ENCODE measurements at regions of chr9 and their contacts with region 1.

Region 1: GRCh38 chr9:87336914-87337333 is 160.7 kb upstream of the DAPK1 start:
- DNase-seq: peak; percentile 24 to 48
- H3K4me3 ChIP-seq: peak overlapping the region; percentile 16
- H3K4me3 Mint-ChIP-seq: peak overlapping the region; percentile 72
- H3K27ac Mint-ChIP-seq: no peak overlapping the region
- H3K4me1 ChIP-seq: peaks cover 10% of the 10 kb centered on the region
- H3K4me1 Mint-ChIP-seq: peaks cover 8% of the 10 kb centered on the region
- H3K27me3 ChIP-seq: no peaks in the 10 kb centered on the region
- H3K27me3 Mint-ChIP-seq: no peaks in the 10 kb centered on the region
- CTCF ChIP-seq: peak in 1 of 2 experiments; percentile 46

Region 2: GRCh38 chr9:87309236-87309635 is 27.7 kb before region 1 on chr9:
- CTCF ChIA-PET with region 1: no interaction called
- POLR2A ChIA-PET with region 1: no interaction called
- intact Hi-C with region 1: no loop called
- DNase-seq: no peak
- H3K4me3 ChIP-seq: no peak overlapping the region
- H3K4me3 Mint-ChIP-seq: no peak overlapping the region
- H3K27ac Mint-ChIP-seq: no peak overlapping the region
- H3K4me1 ChIP-seq: no peaks in the 10 kb centered on the region
- H3K4me1 Mint-ChIP-seq: no peaks in the 10 kb centered on the region
- H3K27me3 ChIP-seq: no peaks in the 10 kb centered on the region
- H3K27me3 Mint-ChIP-seq: peaks cover 4% of the 10 kb centered on the region
- CTCF ChIP-seq: no peak

Region 3: GRCh38 chr9:87324613-87325194 is 12.2 kb before region 1 on chr9:
- CTCF ChIA-PET with region 1: no interaction called
- POLR2A ChIA-PET with region 1: no interaction called
- intact Hi-C with region 1: no loop called
- DNase-seq: peak in 1 of 2 experiments; percentile 18
- H3K4me3 ChIP-seq: no peak overlapping the region
- H3K4me3 Mint-ChIP-seq: no peak overlapping the region
- H3K27ac Mint-ChIP-seq: no peak overlapping the region
- H3K4me1 ChIP-seq: no peaks in the 10 kb centered on the region
- H3K4me1 Mint-ChIP-seq: no peaks in the 10 kb centered on the region
- H3K27me3 ChIP-seq: no peaks in the 10 kb centered on the region
- H3K27me3 Mint-ChIP-seq: peaks cover 3% of the 10 kb centered on the region
- CTCF ChIP-seq: peak; percentile 35 to 40

Region 4: DNA sequence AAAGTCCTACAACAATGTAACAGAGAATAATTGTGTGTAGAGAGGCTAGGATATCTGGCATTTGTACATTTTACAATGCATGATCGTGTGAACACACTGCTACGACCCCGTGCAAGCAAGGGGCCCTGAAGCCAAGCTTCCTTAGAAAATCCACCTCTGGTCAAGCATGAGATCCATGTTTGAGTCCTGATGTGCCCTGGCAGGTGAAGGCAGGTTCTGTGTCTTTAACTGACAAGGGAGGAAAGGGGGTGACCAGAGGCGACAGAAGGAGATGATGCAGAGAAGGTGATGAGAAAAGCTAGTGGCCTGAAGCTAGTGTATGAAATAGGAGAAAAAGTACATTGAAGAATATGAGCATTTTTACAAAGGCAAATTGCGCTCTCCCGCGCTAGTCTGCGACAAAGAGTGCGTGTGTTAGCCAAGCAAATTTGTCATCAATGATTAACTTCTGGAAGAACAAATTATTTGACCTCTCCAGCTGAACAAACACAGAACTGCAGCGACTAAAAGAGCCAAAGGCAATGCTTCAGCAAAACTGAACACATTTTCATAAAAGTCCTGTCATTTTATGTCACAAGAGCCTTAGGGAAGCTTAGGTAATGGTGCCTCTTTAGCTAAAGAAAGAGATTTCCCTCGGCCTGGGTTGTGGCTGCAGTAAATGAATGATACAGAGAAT is 59.0 kb after region 1 on chr9:
- CTCF ChIA-PET with region 1: no interaction called
- POLR2A ChIA-PET with region 1: no interaction called
- intact Hi-C with region 1: loop called (anchors 1 kb)
- DNase-seq: peak; percentile 66 to 69
- H3K4me3 ChIP-seq: no peak overlapping the region
- H3K4me3 Mint-ChIP-seq: peak overlapping the region; percentile 45
- H3K27ac Mint-ChIP-seq: peak overlapping the region; percentile 69
- H3K4me1 ChIP-seq: peaks cover 20% of the 10 kb centered on the region
- H3K4me1 Mint-ChIP-seq: peaks cover 8% of the 10 kb centered on the region
- H3K27me3 ChIP-seq: no peaks in the 10 kb centered on the region
- H3K27me3 Mint-ChIP-seq: no peaks in the 10 kb centered on the region
- CTCF ChIP-seq: no peak

Region 5: GRCh38 chr9:87497604-87498045 is 160.7 kb after region 1 on chr9 and contains the start of gene DAPK1:
- CTCF ChIA-PET with region 1: interaction called, 7 read pairs
- POLR2A ChIA-PET with region 1: no interaction called
- intact Hi-C with region 1: loop called (anchors 1 kb)
- DNase-seq: peak; percentile 68 to 73
- H3K4me3 ChIP-seq: peak within 1 kb of the TSS; percentile 70
- H3K4me3 Mint-ChIP-seq: peak within 1 kb of the TSS; percentile 78
- H3K27ac Mint-ChIP-seq: peak within 1 kb of the TSS; percentile 73
- H3K4me1 ChIP-seq: peaks cover 6% of the 10 kb centered on the region; the same call in 1 of the 2 replicates
- H3K4me1 Mint-ChIP-seq: peaks cover 11% of the 10 kb centered on the region
- H3K27me3 ChIP-seq: no peaks in the 10 kb centered on the region
- H3K27me3 Mint-ChIP-seq: no peaks in the 10 kb centered on the region
- CTCF ChIP-seq: peak; percentile 13 to 18
- total RNA-seq, gene DAPK1: 65.8 and 79.2 TPM in 2 replicates

Region 6: DNA sequence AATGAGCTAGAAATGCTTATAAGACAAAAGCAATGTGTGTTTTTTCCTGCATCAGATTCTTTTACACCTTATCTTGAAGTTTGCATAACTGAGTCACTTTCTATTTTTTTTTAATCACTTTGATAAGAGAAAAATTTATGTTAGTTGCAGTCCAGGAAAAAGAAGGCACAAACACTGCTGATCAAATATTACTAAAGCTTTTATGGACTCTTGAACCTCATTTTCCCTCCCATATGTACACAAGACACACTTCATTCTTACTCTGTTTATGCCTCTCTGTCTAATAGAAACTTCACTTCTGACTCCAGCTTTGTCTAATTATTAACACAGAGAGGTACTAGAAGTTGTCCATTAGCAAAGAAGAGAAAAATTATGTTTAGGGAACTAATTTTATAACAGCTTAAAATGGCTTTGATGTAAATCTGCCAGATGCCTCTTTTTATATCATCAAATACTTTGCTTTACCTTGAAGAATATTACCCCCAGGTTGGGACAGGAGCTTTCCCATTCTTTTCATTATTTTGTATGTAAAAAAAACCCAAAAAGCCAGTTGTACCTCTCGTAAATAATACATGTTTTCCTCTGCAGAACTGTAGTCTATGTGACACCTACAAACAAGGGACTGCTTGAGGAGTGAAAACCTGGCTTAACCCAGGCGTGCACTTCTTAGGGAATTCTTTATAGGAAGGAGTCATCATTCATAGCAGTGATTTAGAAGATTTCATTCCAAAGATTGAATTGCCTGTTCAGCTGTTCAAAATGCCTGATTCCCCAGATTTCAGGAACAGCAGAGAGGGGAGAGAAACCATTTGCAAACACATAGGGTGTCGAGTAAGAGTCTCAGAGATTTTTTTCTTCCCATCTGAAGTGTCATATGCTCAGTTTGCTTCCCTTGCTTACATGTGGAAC is 233.3 kb after region 1 on chr9:
- CTCF ChIA-PET with region 1: no interaction called
- POLR2A ChIA-PET with region 1: no interaction called
- intact Hi-C with region 1: loop called (anchors 10 kb)
- DNase-seq: peak in 1 of 2 experiments; percentile 40
- H3K4me3 ChIP-seq: 0 out of 2 replicates have a peak overlapping the region, but pooled peaks have one; percentile 9
- H3K4me3 Mint-ChIP-seq: peak overlapping the region; percentile 48
- H3K27ac Mint-ChIP-seq: peak overlapping the region; percentile 72
- H3K4me1 ChIP-seq: peaks cover 34% of the 10 kb centered on the region
- H3K4me1 Mint-ChIP-seq: peaks cover 7% of the 10 kb centered on the region
- H3K27me3 ChIP-seq: no peaks in the 10 kb centered on the region
- H3K27me3 Mint-ChIP-seq: no peaks in the 10 kb centered on the region
- CTCF ChIP-seq: no peak

Region 7: GRCh38 chr9:87640385-87640795 is 303.5 kb after region 1 on chr9:
- CTCF ChIA-PET with region 1: no interaction called
- POLR2A ChIA-PET with region 1: no interaction called
- intact Hi-C with region 1: loop called (anchors 5 kb)
- DNase-seq: no peak
- H3K4me3 ChIP-seq: no peak overlapping the region
- H3K4me3 Mint-ChIP-seq: no peak overlapping the region
- H3K27ac Mint-ChIP-seq: no peak overlapping the region
- H3K4me1 ChIP-seq: no peaks in the 10 kb centered on the region
- H3K4me1 Mint-ChIP-seq: no peaks in the 10 kb centered on the region
- H3K27me3 ChIP-seq: no peaks in the 10 kb centered on the region
- H3K27me3 Mint-ChIP-seq: no peaks in the 10 kb centered on the region
- CTCF ChIP-seq: no peak

Region 8: DNA sequence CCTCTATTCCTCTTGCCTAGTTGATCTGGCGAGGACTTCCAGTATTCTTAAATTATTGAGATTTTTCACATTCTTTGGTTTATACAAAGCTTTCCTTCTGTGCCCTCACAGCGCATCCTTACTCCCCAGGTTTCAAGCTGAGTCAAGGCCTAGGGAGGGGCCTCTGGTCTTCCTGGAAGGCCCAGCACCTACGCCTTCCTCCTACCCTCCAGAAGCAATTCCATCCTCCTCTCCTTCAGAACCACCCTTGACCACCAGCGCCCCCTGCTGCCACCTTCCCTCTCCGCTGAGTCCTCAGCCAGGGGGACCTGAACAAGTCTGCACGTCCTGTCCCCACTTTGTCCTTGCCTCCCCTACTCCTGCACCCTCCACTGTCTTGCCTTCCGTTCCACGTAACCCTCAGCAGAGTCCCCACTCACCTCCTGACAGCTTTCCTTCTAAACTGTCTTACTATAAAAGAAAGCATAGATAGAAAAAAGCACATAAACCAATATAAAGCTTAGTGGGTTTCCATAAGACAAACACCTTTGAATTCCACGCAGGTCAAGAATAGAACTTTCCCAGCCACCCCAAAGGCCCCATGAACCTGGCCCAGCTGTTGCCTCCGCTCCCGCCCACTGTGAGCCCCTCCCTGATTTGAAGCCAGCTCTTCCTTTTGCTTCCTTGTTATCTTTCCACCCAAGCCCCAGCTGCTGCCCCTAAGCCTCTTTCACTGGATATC is 326.0 kb after region 1 on chr9:
- CTCF ChIA-PET with region 1: no interaction called
- POLR2A ChIA-PET with region 1: no interaction called
- intact Hi-C with region 1: loop called (anchors 1 kb)
- DNase-seq: peak; percentile 52 to 68
- H3K4me3 ChIP-seq: no peak overlapping the region
- H3K4me3 Mint-ChIP-seq: no peak overlapping the region
- H3K27ac Mint-ChIP-seq: no peak overlapping the region
- H3K4me1 ChIP-seq: no peaks in the 10 kb centered on the region
- H3K4me1 Mint-ChIP-seq: peaks cover 9% of the 10 kb centered on the region
- H3K27me3 ChIP-seq: no peaks in the 10 kb centered on the region
- H3K27me3 Mint-ChIP-seq: no peaks in the 10 kb centered on the region
- CTCF ChIP-seq: peak; percentile 50 to 51